ENCODE measurements at regions of chr1 and their contacts with region 1.

Region 1: DNA sequence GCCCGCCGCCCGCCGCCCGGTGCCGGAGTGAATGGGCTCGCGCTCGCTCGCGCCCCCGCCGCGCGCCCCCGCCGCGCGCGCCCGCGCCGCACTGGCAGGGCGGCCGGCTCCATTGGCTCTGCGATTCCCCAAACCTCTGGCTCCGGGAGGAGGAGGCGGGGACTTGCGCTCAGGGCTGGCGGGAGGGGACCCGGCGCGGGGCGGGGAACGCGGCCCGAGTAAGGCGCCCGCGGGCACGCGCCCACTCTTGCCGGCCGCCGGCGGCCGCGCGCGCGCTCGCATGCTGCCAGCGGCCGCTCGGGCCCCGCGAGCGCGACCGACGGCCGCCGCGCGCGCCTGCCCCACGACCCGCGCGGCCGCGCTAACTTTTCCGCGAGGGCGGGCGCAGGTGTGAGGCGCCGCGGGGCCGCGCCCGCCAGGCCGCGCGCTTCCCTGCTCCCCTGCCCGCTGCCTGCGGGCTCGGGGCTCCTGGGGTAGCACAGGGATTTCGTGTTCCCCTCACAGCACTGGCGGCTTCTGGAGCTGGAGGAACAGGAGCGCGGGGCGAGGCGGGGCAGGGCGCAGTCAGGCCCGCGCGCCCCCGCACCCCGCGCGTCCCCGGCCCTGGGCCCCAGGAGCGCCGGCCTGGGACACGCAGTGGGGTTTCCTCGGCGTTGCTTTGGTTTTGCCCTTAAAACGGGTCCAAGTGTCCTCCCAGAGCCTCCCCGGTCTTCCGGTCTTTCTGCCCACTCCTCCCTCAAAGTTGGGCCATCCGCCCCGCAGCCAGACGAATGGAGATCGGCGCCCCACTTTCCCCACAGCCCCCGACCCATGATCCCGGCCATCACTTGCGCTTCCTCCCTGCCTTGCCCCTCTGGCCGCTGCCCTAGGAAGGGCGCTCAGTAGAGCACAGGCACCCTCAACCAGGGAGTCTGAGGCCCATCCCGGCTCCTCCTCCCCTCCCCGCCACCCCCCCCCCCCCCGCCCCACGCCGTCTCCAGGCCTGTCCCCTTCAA is 101.5 kb downstream of the CASZ1 start:
- DNase-seq: peak; percentile 72
- ATAC-seq: no peak; the same call in 2 of the 3 replicates
- H3K4me3 ChIP-seq: peak overlapping the region; percentile 51 to 72 (median 62); a peak in 5 of 6 replicates
- H3K27ac ChIP-seq: no peak overlapping the region
- H3K4me1 ChIP-seq: peaks cover 28% of the 10 kb centered on the region
- H3K27me3 ChIP-seq: peaks cover 2 to 33% of the 10 kb centered on the region in 2 experiments; a peak in 4 of 5 replicates
- CTCF ChIP-seq: no peak
- EP300 ChIP-seq: no peak
- POLR2A ChIP-seq: no peak
- RAD21 ChIP-seq: no peak

Region 2: GRCh38 chr1:10663678-10664035 is 31.3 kb before region 1 on chr1:
- CTCF ChIA-PET with region 1: no interaction called
- POLR2A ChIA-PET with region 1: no interaction called
- in situ Hi-C with region 1: no loop called
- intact Hi-C with region 1: no loop called
- DNase-seq: no peak
- ATAC-seq: no peak
- H3K4me3 ChIP-seq: no peak overlapping the region
- H3K27ac ChIP-seq: no peak overlapping the region
- H3K4me1 ChIP-seq: peaks cover 18% of the 10 kb centered on the region
- H3K27me3 ChIP-seq: no peaks in the 10 kb centered on the region
- CTCF ChIP-seq: no peak
- EP300 ChIP-seq: no peak
- POLR2A ChIP-seq: no peak
- RAD21 ChIP-seq: no peak

Region 3: DNA sequence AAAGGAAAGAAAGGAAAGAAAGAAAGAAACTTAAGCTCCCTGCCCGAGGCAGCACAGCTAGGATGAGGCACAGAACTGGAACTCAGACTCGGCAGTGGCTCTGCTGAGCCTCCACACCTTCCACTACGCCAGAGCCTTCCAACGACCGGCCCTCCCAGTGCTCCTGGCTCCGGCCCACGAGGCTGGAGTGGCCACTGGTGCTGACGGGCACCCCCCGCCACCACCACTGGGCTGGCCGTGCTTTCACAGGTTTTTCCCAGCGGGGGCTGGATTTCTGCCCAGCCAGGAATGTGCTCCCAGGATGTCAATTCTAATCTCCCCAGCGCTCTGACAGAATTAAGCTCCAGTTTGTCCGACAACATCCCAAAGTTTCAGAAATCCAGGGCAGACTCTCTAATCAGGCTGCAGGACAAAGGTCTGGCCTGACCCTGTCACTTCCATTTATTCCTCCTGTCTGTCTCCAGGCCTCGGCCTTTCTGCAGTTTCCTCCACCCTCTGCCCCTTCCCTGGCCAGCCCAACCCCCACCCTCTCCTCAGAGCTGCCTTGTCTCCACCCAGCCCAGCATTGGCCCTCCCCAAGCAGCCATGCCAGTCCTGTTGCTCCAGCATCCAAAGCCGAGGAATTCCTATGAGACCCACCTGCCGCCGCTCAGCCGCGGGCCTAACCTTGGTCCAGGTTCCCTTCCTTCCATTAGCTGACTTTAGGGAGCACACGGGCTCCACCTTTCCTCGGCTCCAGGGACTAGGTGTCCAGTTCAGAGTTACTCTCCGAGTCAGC is 19.6 kb after region 1 on chr1:
- CTCF ChIA-PET with region 1: no interaction called
- POLR2A ChIA-PET with region 1: no interaction called
- in situ Hi-C with region 1: no loop called
- intact Hi-C with region 1: no loop called
- DNase-seq: no peak
- ATAC-seq: no peak
- H3K4me3 ChIP-seq: no peak overlapping the region
- H3K27ac ChIP-seq: no peak overlapping the region
- H3K4me1 ChIP-seq: no peaks in the 10 kb centered on the region
- H3K27me3 ChIP-seq: peaks cover 6 to 49% of the 10 kb centered on the region in 2 experiments; a peak in 4 of 5 replicates
- CTCF ChIP-seq: no peak
- EP300 ChIP-seq: no peak
- POLR2A ChIP-seq: no peak
- RAD21 ChIP-seq: no peak

Region 4: GRCh38 chr1:10788592-10789006 is 93.7 kb after region 1 on chr1:
- CTCF ChIA-PET with region 1: interaction called, 4 read pairs
- POLR2A ChIA-PET with region 1: no interaction called
- in situ Hi-C with region 1: no loop called
- intact Hi-C with region 1: loop called (anchors 2 kb)
- DNase-seq: peak; percentile 33
- ATAC-seq: peak; percentile 98
- H3K4me3 ChIP-seq: no peak overlapping the region
- H3K27ac ChIP-seq: no peak overlapping the region
- H3K4me1 ChIP-seq: peaks cover 6% of the 10 kb centered on the region
- H3K27me3 ChIP-seq: peaks cover 6 to 55% of the 10 kb centered on the region in 2 experiments; a peak in 4 of 5 replicates
- CTCF ChIP-seq: peak; percentile 68
- EP300 ChIP-seq: no peak
- POLR2A ChIP-seq: no peak
- RAD21 ChIP-seq: peak; percentile 71

Region 5: GRCh38 chr1:10867138-10867721 is 172.3 kb after region 1 on chr1:
- CTCF ChIA-PET with region 1: interaction called, 9 read pairs
- POLR2A ChIA-PET with region 1: no interaction called
- in situ Hi-C with region 1: loop called (anchors 10 kb)
- intact Hi-C with region 1: loop called (anchors 2 kb)
- DNase-seq: no peak
- ATAC-seq: peak; percentile 88
- H3K4me3 ChIP-seq: peak overlapping the region in 2 of 3 experiments; percentile 22 to 52; a peak in 4 of 6 replicates
- H3K27ac ChIP-seq: no peak overlapping the region
- H3K4me1 ChIP-seq: peaks cover 25% of the 10 kb centered on the region
- H3K27me3 ChIP-seq: peaks cover 4 to 67% of the 10 kb centered on the region in 2 experiments
- CTCF ChIP-seq: peak; percentile 49; the same call in 1 of the 2 replicates
- EP300 ChIP-seq: no peak
- POLR2A ChIP-seq: no peak
- RAD21 ChIP-seq: peak; percentile 82